GM10248 (cell line): ENCODE measurements at regions of chr11 and their contacts with region 1.

Region 1: GRCh38 chr11:124402326-124402922 is 3.6 kb upstream of the OR8B3 start:
- DNase-seq: peak; percentile 57
- CTCF ChIP-seq: peak; percentile 59

Region 2: DNA sequence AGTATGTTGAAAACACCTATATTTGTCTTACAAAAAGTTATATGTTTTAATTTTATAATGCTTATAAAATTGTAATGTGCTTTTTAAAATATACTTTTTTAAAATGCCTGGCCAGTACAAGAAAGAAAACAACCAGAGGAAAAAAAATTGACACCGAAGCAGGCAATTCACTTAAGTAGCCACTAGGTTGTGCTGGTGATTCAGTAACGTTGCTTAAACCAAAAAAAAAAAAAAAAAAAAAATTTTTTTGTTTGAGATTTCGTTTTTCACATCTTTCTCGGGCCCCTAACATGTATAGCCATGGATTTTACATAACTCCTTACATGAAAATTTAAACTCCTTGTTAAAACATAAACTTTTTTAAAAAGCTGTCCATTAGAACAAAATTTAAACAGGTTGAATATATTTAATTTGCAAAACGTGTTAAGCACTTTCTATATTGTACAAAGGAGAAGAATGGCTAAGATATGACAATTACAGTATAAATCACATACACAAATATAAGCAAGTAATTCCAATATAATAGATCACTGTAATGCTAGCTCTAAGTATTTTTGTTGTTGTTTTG is 13.0 kb after region 1 on chr11:
- CTCF ChIA-PET with region 1: interaction called, 14 read pairs
- POLR2A ChIA-PET with region 1: no interaction called
- DNase-seq: peak; percentile 25
- CTCF ChIP-seq: peak; percentile 36

Region 3: GRCh38 chr11:124429599-124429998 is 27.2 kb after region 1 on chr11:
- CTCF ChIA-PET with region 1: interaction called, 10 read pairs
- POLR2A ChIA-PET with region 1: no interaction called
- DNase-seq: no peak
- CTCF ChIP-seq: no peak